CD8-positive, alpha-beta T cell (primary cell): ENCODE measurements at regions of chr1 and their contacts with region 1.

Region 1: GRCh38 chr1:160951443-160952128 is 3.0 kb downstream of the ITLN2 start:
- DNase-seq: peak; percentile 42 to 83 (median 73)
- ATAC-seq: peak; percentile 91
- H3K4me3 ChIP-seq: no peak overlapping the region
- H3K4me3 Mint-ChIP-seq: no peak overlapping the region
- H3K27ac ChIP-seq: no peak overlapping the region
- H3K27ac Mint-ChIP-seq: no peak overlapping the region
- H3K4me1 ChIP-seq: peaks cover 8% of the 10 kb centered on the region
- H3K4me1 Mint-ChIP-seq: peaks cover 12% of the 10 kb centered on the region
- H3K27me3 ChIP-seq: no peaks in the 10 kb centered on the region
- H3K27me3 Mint-ChIP-seq: no peaks in the 10 kb centered on the region
- CTCF ChIP-seq: peak; percentile 79

Region 2: DNA sequence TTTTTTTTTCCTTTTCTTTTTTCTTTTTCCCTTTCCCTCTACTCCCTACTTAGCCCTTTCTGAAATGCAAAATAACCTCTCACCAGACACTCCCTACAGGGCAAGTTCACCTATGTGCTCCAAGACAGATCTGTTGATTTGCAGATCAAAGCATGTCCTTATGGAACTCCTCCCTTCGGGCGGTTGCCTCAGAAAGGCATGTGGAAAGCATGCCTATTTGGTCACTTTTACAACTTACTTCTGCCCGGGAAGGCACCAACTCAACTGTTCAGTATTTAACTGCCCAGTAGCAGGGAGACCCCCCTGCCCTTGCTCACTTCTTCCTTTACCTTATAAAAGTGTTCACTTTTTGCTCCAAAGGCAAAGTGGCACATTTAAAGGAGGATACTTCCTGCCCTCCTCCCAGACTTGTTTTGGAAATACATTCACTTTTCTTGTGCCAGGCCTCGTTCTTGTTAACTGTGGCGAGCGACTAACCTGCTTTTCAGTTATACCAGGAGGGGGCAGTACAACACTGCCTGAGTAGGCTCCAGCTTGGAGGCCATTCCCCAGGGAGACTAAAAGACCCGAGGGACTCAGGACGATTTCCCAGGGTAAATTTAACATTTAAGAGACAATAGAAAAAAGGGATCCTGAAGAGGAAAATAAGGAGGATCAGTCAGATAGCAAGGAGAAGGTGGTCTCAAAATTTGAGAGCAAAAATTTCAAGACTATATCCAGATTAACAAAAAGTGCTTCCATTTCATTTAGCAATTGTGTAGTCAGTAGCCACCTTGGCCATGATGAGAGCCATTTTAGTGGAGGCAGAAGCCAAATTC is 224.9 kb before region 1 on chr1:
- CTCF ChIA-PET with region 1: interaction called, 100 read pairs
- POLR2A ChIA-PET with region 1: no interaction called
- intact Hi-C with region 1: loop called (anchors 1 kb)
- DNase-seq: peak; percentile 29 to 89 (median 63)
- ATAC-seq: peak; percentile 86
- H3K4me3 ChIP-seq: no peak overlapping the region
- H3K4me3 Mint-ChIP-seq: no peak overlapping the region
- H3K27ac ChIP-seq: peak overlapping the region in 1 of 2 experiments; percentile 22
- H3K27ac Mint-ChIP-seq: no peak overlapping the region
- H3K4me1 ChIP-seq: peaks cover 21% of the 10 kb centered on the region
- H3K4me1 Mint-ChIP-seq: peaks cover 16% of the 10 kb centered on the region
- H3K27me3 ChIP-seq: no peaks in the 10 kb centered on the region
- H3K27me3 Mint-ChIP-seq: no peaks in the 10 kb centered on the region
- CTCF ChIP-seq: peak; percentile 99

Region 3: GRCh38 chr1:160777486-160778089 is 174.0 kb before region 1 on chr1:
- CTCF ChIA-PET with region 1: interaction called, 130 read pairs
- POLR2A ChIA-PET with region 1: no interaction called
- intact Hi-C with region 1: loop called (anchors 1 to 2 kb)
- DNase-seq: peak in 7 of 9 experiments; percentile 33 to 79 (median 52)
- ATAC-seq: peak; percentile 84
- H3K4me3 ChIP-seq: no peak overlapping the region
- H3K4me3 Mint-ChIP-seq: no peak overlapping the region
- H3K27ac ChIP-seq: no peak overlapping the region
- H3K27ac Mint-ChIP-seq: no peak overlapping the region
- H3K4me1 ChIP-seq: no peaks in the 10 kb centered on the region
- H3K4me1 Mint-ChIP-seq: peaks cover 20% of the 10 kb centered on the region
- H3K27me3 ChIP-seq: no peaks in the 10 kb centered on the region
- H3K27me3 Mint-ChIP-seq: no peaks in the 10 kb centered on the region
- CTCF ChIP-seq: peak; percentile 77

Region 4: DNA sequence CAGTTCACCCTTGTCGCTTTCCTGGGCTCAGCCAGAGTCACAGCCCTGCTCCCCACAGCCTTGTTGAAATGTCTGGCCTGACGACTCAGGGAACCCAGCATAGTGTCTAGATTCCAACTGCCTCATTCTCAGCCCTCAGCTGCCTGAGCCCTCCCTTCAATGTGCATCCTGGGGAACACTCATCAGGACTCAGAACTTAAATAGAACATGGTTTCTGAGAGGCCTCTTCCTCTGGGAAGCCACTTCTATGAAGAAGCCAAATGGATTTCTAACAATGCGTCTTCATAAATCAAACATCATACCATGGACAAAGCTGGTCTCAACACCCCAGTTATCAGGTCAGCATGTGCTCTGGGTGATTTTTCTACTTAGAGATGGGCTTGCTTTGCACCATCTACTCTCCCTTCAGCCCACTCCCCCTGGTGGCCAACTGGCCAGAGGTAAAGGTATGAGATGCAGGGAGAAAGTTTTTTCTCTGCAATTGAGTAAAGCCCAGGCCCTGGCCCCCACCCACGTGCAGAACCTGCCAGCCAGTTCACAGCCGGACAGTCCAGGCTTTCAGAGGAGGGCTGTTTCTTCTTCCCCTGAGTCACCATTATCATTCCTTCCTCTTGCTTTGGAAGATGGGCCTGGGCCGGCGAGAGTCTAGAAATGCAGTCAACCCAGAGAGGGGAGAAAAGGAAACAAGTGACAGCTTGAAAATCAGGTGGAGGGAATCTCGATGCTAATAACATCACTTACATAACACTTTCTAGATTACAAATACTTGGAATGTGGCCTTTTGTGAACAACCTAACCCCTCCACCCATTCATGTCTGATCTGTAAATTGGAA is 121.0 kb before region 1 on chr1:
- CTCF ChIA-PET with region 1: interaction called, 189 read pairs
- POLR2A ChIA-PET with region 1: no interaction called
- intact Hi-C with region 1: loop called (anchors 1 kb)
- DNase-seq: peak; percentile 52 to 87 (median 80)
- ATAC-seq: peak; percentile 70
- H3K4me3 ChIP-seq: no peak overlapping the region
- H3K4me3 Mint-ChIP-seq: no peak overlapping the region
- H3K27ac ChIP-seq: peak overlapping the region in 1 of 2 experiments; percentile 15
- H3K27ac Mint-ChIP-seq: peak overlapping the region; percentile 86
- H3K4me1 ChIP-seq: peaks cover 25% of the 10 kb centered on the region
- H3K4me1 Mint-ChIP-seq: peaks cover 58% of the 10 kb centered on the region
- H3K27me3 ChIP-seq: no peaks in the 10 kb centered on the region
- H3K27me3 Mint-ChIP-seq: no peaks in the 10 kb centered on the region
- CTCF ChIP-seq: peak; percentile 73

Region 5: GRCh38 chr1:160877221-160877620 is 74.4 kb before region 1 on chr1:
- CTCF ChIA-PET with region 1: interaction called, 21 read pairs
- POLR2A ChIA-PET with region 1: no interaction called
- intact Hi-C with region 1: no loop called
- DNase-seq: peak in 3 of 9 experiments; percentile 21 to 78 (median 67)
- ATAC-seq: peak; percentile 86
- H3K4me3 ChIP-seq: no peak overlapping the region
- H3K4me3 Mint-ChIP-seq: no peak overlapping the region
- H3K27ac ChIP-seq: no peak overlapping the region
- H3K27ac Mint-ChIP-seq: peak overlapping the region; percentile 0
- H3K4me1 ChIP-seq: peaks cover 11% of the 10 kb centered on the region
- H3K4me1 Mint-ChIP-seq: peaks cover 27% of the 10 kb centered on the region
- H3K27me3 ChIP-seq: no peaks in the 10 kb centered on the region
- H3K27me3 Mint-ChIP-seq: no peaks in the 10 kb centered on the region
- CTCF ChIP-seq: peak; percentile 62

Region 6: GRCh38 chr1:160963521-160963920 is 11.9 kb after region 1 on chr1:
- CTCF ChIA-PET with region 1: interaction called, 10 read pairs
- POLR2A ChIA-PET with region 1: no interaction called
- intact Hi-C with region 1: no loop called
- DNase-seq: no peak
- ATAC-seq: no peak
- H3K4me3 ChIP-seq: no peak overlapping the region
- H3K4me3 Mint-ChIP-seq: no peak overlapping the region
- H3K27ac ChIP-seq: no peak overlapping the region
- H3K27ac Mint-ChIP-seq: no peak overlapping the region
- H3K4me1 ChIP-seq: no peaks in the 10 kb centered on the region
- H3K4me1 Mint-ChIP-seq: no peaks in the 10 kb centered on the region
- H3K27me3 ChIP-seq: no peaks in the 10 kb centered on the region
- H3K27me3 Mint-ChIP-seq: no peaks in the 10 kb centered on the region
- CTCF ChIP-seq: no peak